Kidney (tissue), 22 donors: ENCODE measurements at regions of chr12 and their contacts with region 1.

Region 1: GRCh38 chr12:42023733-42024494 is 120.8 kb downstream of the GXYLT1 start:
- DNase-seq: peak; percentile 87 to 94 (median 88)
- H3K4me3 ChIP-seq: peak overlapping the region; percentile 52 to 78 (median 59)
- H3K27ac ChIP-seq: no peak overlapping the region
- H3K4me1 ChIP-seq: peaks cover 0 to 2% (median 0%) of the 10 kb centered on the region in 3 donors
- H3K27me3 ChIP-seq: no peaks in the 10 kb centered on the region
- CTCF ChIP-seq: peak; percentile 96

Region 2: DNA sequence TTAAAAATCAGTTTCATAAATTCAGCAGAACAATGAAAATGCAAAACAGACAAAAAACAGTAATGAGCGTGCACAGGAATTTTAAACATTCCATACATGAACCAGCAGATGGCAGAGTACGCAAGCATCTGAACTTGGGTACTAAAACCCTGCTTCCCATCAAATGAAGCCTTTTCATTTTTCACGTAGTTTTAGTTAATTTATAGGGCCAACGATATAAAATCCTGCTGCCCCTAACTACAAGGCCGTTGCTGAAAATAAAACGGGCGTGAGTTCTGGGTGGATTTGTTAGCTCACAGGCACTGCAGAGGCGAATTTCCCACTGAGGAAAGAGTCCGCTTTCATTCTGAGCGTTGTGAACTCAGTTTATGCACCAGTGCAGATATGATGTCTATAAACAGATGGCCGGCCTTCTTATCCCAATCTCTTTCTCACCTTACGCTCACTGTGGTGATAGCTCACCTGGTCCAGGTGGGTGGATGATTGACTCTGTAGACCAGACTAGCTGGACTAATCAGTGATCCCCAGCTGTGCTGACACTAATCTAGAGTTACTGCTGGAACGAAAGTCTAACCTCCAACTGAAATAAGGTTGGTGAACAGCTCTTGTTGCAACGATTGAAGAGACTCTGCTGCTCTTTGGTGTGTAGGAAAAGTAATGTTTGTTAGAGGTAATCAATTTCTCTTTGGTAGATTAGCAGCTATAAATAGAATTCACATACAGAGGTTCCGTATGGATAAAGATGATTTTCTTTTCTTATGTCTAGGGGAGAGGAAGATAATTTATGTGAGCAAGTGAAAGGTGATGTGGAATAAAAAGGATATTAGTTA is 746.6 kb before region 1 on chr12:
- intact Hi-C with region 1: loop called (anchors 10 kb)
- DNase-seq: peak in 3 of 5 donors; percentile 51 to 79 (median 60)
- H3K4me3 ChIP-seq: peak overlapping the region; percentile 23 to 67 (median 52)
- H3K27ac ChIP-seq: no peak overlapping the region
- H3K4me1 ChIP-seq: peaks cover 0 to 2% (median 0%) of the 10 kb centered on the region in 3 donors
- H3K27me3 ChIP-seq: no peaks in the 10 kb centered on the region
- CTCF ChIP-seq: peak; percentile 62

Region 3: DNA sequence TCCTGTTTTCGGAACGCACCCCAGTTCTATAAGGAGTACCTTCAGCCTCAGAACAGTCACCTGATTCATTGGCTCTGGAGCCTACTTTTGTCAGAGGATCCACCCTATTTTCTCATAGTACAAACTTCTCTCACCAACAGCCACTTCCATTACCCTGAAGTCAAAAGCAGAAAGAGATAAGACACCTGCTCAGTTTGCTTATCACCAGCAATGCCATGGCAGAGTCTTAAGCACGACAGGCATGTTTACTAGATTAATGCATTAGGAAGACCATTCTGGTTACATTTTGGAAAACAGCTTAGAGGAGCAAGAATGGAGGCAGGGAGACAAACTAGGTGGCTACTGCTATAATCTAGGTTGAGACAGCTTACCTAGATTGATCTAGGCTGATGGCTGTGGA is 53.1 kb after region 1 on chr12:
- intact Hi-C with region 1: no loop called
- DNase-seq: no peak
- H3K4me3 ChIP-seq: no peak overlapping the region
- H3K27ac ChIP-seq: no peak overlapping the region
- H3K4me1 ChIP-seq: no peaks in the 10 kb centered on the region
- H3K27me3 ChIP-seq: no peaks in the 10 kb centered on the region
- CTCF ChIP-seq: no peak